Dendritic cell treated with granulocyte-macrophage colony-stimulating factor and Interleukin-4, amounts not matched to agents 40 ng/mL and 50 ng/mL, for 4 days (primary cell): ENCODE measurements at regions of chr2 and their contacts with region 1.

Region 1: GRCh38 chr2:40584432-40584831 is 132.5 kb upstream of the SLC8A1 start:
- H3K4me3 Mint-ChIP-seq: no peak overlapping the region
- H3K27ac Mint-ChIP-seq: no peak overlapping the region
- H3K4me1 Mint-ChIP-seq: no peaks in the 10 kb centered on the region
- H3K27me3 Mint-ChIP-seq: no peaks in the 10 kb centered on the region

Region 2: DNA sequence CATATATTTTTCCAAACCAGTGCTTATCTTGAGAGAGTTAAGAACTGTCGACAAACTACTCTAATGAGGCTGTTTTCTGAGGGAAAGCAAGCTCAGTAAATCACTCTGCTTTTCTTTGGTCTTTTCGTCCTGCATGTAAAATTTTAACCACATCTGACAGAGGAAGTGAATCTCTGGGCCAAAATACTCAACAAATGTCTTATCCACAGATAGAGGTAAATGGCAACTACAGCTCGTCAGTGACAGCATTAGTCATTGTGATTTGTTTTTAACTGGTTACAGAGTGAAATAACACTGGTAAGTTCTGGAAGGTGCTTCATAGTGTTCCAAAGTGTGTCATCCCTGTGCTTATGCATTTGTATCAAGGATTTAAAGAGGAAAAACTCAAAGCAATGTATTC is 49.9 kb before region 1 on chr2:
- intact Hi-C with region 1: no loop called
- H3K4me3 Mint-ChIP-seq: no peak overlapping the region
- H3K27ac Mint-ChIP-seq: no peak overlapping the region
- H3K4me1 Mint-ChIP-seq: no peaks in the 10 kb centered on the region
- H3K27me3 Mint-ChIP-seq: no peaks in the 10 kb centered on the region

Region 3: DNA sequence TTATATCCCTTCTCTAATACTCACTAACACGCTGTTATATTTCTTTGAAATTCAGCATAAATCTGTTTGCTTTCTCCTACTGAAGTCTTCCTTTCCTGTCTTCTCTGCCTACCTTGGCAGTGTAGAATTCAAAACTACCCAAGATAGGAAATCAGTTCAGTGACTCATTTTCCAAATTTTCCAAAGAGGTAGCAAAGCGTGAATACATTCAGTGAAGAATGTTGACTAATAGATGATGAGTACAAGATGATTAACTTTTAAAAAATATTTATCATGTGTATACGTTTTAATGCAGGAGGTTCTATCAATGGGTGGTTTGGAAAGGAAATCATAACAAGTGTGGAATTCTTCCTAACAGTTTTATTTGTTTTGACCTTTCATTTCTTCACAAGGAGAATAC is 69.4 kb after region 1 on chr2:
- intact Hi-C with region 1: loop called (anchors 2 kb)
- H3K4me3 Mint-ChIP-seq: no peak overlapping the region
- H3K27ac Mint-ChIP-seq: no peak overlapping the region
- H3K4me1 Mint-ChIP-seq: no peaks in the 10 kb centered on the region
- H3K27me3 Mint-ChIP-seq: no peaks in the 10 kb centered on the region